Activated CD4-positive, alpha-beta T cell treated with anti-CD3 and anti-CD28 coated beads for 36 hours (primary cell): ENCODE measurements at regions of chr6 and their contacts with region 1.

Region 1: DNA sequence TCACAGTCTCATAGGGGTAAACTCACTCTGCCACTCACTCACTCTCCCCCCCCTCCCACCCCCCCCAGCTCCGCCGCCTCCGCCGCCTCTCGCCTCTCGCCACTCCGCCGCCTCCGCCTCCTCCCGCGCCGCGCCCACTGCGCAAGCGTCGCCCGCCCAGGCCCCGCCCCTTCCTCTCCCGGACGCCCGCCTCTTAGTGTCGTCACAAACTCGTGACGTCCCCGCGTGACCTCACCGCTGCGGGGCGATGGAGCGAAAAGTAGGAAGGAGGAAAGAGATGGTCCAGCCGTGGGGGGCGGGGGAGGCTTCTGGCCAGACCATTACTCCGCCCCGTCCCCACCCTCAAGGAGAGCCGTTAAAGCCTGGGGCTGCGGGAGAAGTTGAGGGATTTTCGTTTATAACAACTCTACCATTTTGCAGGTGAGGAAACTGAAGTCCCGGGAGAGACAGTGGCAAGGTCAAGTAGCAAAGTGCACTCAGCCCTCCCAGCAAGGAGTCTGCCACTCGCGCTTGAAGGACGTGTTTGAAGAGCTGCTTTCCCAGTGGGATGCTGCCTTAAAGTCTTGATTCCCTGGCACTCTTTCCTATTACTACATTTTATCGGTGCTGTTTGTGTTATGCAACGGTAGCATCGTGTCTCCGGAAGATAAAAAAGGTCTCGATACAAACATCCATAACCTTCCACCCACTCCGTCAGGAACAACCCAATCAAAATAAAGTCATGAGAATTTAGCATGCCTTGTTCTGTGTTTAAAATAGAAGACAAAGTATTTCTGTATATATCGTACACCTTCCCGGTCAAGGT is at the start of gene ILRUN:
- DNase-seq: peak; percentile 98
- ATAC-seq: peak; percentile 84
- H3K4me3 Mint-ChIP-seq: peak within 1 kb of the TSS; percentile 92
- H3K27ac Mint-ChIP-seq: peak within 1 kb of the TSS; percentile 99
- H3K4me1 Mint-ChIP-seq: peaks cover 45% of the 10 kb centered on the region
- H3K27me3 Mint-ChIP-seq: no peaks in the 10 kb centered on the region
- total RNA-seq, gene ILRUN: 56.2 to 66.9 TPM

Region 2: GRCh38 chr6:34223956-34224940 is 472.7 kb before region 1 on chr6:
- CTCF ChIA-PET with region 1: no interaction called
- POLR2A ChIA-PET with region 1: no interaction called
- intact Hi-C with region 1: loop called in 1 of 2 experiments (anchors 5 kb)
- DNase-seq: peak; percentile 98
- ATAC-seq: peak; percentile 97
- H3K4me3 Mint-ChIP-seq: peak overlapping the region; percentile 52
- H3K27ac Mint-ChIP-seq: peak overlapping the region; percentile 88
- H3K4me1 Mint-ChIP-seq: peaks cover 44% of the 10 kb centered on the region
- H3K27me3 Mint-ChIP-seq: no peaks in the 10 kb centered on the region

Region 3: DNA sequence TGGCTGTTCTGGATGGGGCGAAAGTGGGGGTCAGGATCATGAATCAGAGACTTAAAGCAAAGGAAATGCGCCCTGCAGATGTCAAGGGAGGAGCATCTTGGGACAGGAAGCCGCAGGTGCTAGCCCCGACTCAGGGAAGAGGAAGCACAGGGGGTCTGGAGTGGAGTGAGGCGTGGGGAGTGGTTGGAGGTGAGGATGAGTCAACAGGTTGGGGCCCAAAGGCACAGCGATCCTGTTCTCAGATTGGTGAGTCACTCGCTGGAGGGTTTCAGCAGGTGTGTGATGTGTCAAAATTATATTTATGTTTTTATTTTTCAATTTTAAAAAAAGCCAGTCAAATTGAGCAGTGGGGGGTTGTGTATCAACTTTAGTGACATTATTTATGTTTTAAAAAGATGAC is 212.0 kb before region 1 on chr6:
- CTCF ChIA-PET with region 1: no interaction called
- POLR2A ChIA-PET with region 1: no interaction called
- intact Hi-C with region 1: loop called in 1 of 2 experiments (anchors 10 kb)
- DNase-seq: peak; percentile 90
- ATAC-seq: peak; percentile 98
- H3K4me3 Mint-ChIP-seq: peak overlapping the region; percentile 24
- H3K27ac Mint-ChIP-seq: peak overlapping the region; percentile 87
- H3K4me1 Mint-ChIP-seq: peaks cover 27% of the 10 kb centered on the region
- H3K27me3 Mint-ChIP-seq: no peaks in the 10 kb centered on the region

Region 4: DNA sequence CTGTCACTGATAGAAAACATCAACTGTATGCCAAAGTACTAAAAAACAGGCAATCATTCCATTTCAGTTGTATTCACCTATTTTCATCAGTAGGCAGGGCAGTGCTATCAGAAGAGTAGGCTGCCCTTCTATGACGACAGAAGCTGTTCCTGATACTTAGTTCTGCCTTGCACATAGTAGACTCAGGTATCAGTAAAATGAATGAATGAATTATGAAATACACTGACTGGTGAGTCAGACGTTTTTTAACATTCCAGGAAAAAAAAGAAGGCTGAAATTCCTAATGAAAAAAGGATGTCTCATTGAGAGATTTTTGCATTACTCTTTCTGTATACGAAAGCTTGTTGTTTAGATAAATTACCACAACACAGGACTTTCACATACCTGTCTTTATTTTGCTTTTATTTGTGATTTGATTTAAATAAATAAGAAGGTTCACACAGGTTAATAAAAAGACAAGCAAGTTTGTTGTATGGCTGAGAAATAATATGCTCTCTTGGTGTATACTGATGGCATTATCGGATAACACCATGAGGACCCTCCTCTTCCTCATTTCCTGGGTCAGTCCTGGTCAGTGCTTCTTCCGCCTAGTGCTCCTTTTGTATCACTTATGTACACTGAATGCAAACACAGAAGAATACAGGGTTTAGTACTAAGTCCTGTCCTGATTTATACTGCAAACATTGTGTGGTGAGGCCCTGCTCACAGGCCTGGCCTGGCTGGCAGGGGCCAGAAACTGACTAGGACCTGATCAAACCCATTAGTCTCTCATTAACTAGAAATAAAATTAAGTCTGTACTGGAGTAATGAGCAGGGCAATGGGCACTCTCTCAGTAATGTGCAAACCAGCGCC is 101.4 kb before region 1 on chr6:
- CTCF ChIA-PET with region 1: no interaction called
- POLR2A ChIA-PET with region 1: no interaction called
- intact Hi-C with region 1: no loop called
- DNase-seq: no peak
- ATAC-seq: no peak
- H3K4me3 Mint-ChIP-seq: no peak overlapping the region
- H3K27ac Mint-ChIP-seq: no peak overlapping the region
- H3K4me1 Mint-ChIP-seq: peaks cover 19% of the 10 kb centered on the region
- H3K27me3 Mint-ChIP-seq: no peaks in the 10 kb centered on the region

Region 5: DNA sequence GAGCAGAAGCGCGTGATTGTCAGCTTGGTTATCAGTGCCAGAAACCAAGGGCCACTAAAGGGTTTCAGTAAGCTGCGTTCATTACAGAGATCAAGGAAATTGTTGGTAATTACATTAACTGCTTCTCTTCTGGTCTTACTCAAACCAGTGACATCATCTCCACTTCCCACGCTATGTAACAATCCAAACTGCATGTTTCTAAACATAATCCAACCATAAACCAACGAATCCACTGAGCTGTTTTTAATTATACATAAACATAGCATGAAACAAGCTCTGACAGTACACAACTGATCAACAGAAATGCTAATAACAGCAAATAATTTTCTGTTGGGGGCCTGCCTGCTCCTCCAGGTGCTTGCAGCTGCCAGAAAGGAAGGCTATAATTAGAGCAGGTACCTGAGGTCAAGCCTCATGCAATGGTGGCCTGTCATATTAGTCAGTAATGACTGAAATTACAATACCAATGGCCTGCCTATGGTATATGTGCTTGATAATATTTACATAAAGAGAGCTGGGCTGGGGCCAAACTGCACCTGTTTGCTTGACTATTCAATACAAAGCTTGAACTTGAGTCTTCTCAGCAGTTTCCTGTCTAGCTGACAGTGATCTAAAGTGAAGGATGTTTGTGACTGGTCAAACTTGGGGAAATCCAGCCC is 40.4 kb before region 1 on chr6:
- CTCF ChIA-PET with region 1: no interaction called
- POLR2A ChIA-PET with region 1: interaction called, 11 read pairs
- intact Hi-C with region 1: loop called (anchors 1 kb)
- DNase-seq: peak; percentile 74
- ATAC-seq: peak; percentile 94
- H3K4me3 Mint-ChIP-seq: peak overlapping the region; percentile 58
- H3K27ac Mint-ChIP-seq: peak overlapping the region; percentile 90
- H3K4me1 Mint-ChIP-seq: peaks cover 55% of the 10 kb centered on the region
- H3K27me3 Mint-ChIP-seq: no peaks in the 10 kb centered on the region

Region 6: DNA sequence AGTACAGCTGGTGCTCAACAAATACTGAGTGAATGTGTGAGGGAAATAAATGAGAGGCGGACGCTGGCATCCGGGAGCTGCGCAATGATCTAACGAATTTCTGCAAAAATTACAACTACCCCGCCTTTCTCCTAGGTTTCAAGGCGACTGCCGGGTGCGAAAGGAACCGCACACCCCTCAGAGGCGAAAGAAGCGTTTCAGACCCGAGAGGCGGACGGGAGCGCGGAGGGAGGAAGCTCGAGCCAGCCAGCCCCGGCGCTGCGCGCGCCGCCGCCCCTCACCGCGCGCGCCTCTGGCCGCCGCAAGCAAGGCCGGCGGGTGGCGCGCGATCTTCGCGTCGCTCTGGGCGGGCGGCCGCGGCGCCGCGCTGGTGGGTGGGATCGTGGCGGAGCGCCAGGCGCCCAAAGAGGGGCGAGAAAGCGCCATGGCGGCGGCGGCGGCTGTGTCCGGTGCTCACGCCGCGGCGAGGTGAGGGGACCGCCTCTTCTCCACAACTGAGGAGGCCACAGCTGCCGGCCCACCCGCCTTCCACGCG is 94.8 kb after region 1 on chr6 and contains the start of gene BLTP3A:
- CTCF ChIA-PET with region 1: no interaction called
- POLR2A ChIA-PET with region 1: no interaction called
- intact Hi-C with region 1: loop called in 1 of 2 experiments (anchors 1 kb)
- DNase-seq: peak; percentile 88
- ATAC-seq: peak; percentile 95
- H3K4me3 Mint-ChIP-seq: peak within 1 kb of the TSS; percentile 99
- H3K27ac Mint-ChIP-seq: peak within 1 kb of the TSS; percentile 95
- H3K4me1 Mint-ChIP-seq: peaks cover 21% of the 10 kb centered on the region
- H3K27me3 Mint-ChIP-seq: no peaks in the 10 kb centered on the region
- total RNA-seq, gene BLTP3A: 17.0 to 21.0 TPM

Region 7: DNA sequence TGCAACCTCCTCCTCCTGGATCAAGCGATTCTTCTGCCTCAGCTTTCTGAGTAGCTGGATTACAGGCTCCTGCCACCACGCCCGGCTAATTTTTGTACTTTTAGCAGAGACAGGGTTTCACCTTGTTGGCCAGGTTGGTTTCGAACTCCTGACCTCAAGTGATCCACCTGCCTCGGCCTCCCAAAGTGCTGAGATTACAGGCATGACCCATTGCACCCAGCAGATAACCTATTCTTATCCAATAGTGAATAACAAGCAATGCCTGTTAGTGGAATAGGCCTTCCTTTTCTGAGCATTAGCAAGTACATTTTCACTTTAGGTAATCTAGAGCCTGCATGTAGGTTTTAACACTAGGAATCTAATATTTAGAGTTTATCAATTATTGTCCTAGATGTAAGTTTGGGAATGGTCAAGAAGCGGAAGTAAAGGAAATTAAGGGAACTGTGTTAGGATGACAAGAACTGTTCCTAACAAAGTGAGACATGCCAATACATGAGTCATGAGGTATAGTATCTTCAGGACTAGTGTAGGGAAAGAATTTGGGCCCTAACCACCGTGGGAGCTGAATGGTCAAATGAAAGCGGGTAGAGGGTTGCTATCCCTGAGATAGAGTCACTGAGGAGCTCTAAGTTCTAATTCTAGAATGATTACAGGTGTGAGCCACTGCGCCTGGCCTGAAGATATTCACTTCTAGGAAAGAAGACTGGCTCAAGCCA is 110.0 kb after region 1 on chr6:
- CTCF ChIA-PET with region 1: no interaction called
- POLR2A ChIA-PET with region 1: no interaction called
- intact Hi-C with region 1: no loop called
- DNase-seq: no peak
- ATAC-seq: no peak
- H3K4me3 Mint-ChIP-seq: no peak overlapping the region
- H3K27ac Mint-ChIP-seq: no peak overlapping the region
- H3K4me1 Mint-ChIP-seq: peaks cover 14% of the 10 kb centered on the region
- H3K27me3 Mint-ChIP-seq: no peaks in the 10 kb centered on the region